ENCODE measurements at regions of chr3 and their contacts with region 1.

Region 1: DNA sequence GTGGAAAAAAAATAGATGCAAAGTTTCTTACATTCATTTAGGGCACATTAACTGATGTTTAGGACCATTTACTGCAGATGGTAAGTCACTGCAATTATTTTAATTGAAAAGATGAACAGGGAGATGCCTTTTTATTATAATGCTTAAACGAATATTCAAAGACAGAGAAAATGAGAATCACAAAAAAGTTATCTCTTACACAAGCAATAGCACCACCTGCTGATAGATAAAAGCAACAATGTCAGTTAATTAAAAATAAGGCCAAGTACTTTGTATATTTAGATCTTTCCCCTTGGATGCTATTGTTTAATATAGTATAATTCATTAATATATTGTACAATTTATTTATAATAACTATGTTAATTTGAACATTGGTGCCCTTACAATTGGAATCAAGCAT is 55.9 kb downstream of the IFT80 start:
- DNase-seq: no peak
- H3K4me3 ChIP-seq: no peak overlapping the region
- H3K27ac ChIP-seq: no peak overlapping the region
- H3K4me1 ChIP-seq: no peaks in the 10 kb centered on the region
- H3K27me3 ChIP-seq: no peaks in the 10 kb centered on the region
- CTCF ChIP-seq: peak in 5 of 6 experiments; percentile 20 to 54 (median 30)
- POLR2A ChIP-seq: no peak

Region 2: DNA sequence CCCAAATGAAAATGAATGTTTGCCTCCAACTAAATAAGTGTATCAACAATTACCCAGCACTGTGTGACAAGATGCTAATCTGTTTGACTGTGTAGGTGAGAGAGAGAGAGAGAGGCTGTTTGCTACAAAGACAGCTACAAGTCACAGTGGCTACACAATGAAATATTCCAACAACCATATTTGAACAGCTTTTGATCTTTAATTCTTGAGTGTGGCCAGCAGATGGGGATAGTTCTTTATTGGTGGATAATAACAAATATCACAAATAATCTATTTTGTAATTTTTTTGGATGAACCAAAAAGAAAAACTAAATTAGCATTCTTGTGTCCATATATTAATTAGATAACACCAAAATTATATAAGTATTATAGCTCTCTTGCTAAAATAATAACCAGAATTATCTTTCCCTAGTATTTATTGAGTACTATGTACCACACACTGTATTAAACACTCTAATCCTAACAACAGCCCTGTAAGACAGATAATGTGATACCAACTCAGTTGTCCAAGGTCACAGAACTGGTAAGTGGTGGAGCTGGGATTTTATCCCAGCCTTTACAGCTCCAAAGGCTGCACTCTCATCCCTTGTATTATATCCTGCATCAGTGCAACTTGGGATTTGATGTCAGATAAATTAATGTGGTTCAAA is 179.8 kb before region 1 on chr3:
- intact Hi-C with region 1: loop called (anchors 10 kb)
- DNase-seq: no peak
- H3K4me3 ChIP-seq: no peak overlapping the region
- H3K27ac ChIP-seq: no peak overlapping the region
- H3K4me1 ChIP-seq: no peaks in the 10 kb centered on the region
- H3K27me3 ChIP-seq: no peaks in the 10 kb centered on the region
- CTCF ChIP-seq: peak in 4 of 6 experiments; percentile 16 to 41 (median 30)
- POLR2A ChIP-seq: no peak

Region 3: GRCh38 chr3:160616716-160617115 is 273.6 kb after region 1 on chr3:
- intact Hi-C with region 1: no loop called
- DNase-seq: no peak
- H3K4me3 ChIP-seq: no peak overlapping the region
- H3K27ac ChIP-seq: no peak overlapping the region
- H3K4me1 ChIP-seq: peaks cover 0 to 17% (median 0%) of the 10 kb centered on the region in 3 donors
- H3K27me3 ChIP-seq: no peaks in the 10 kb centered on the region
- CTCF ChIP-seq: no peak
- POLR2A ChIP-seq: no peak